Activated naive CD4-positive, alpha-beta T cell treated with anti-CD3 and anti-CD28 coated beads for 36 hours (primary cell): ENCODE measurements at regions of chr3 and their contacts with region 1.

Region 1: DNA sequence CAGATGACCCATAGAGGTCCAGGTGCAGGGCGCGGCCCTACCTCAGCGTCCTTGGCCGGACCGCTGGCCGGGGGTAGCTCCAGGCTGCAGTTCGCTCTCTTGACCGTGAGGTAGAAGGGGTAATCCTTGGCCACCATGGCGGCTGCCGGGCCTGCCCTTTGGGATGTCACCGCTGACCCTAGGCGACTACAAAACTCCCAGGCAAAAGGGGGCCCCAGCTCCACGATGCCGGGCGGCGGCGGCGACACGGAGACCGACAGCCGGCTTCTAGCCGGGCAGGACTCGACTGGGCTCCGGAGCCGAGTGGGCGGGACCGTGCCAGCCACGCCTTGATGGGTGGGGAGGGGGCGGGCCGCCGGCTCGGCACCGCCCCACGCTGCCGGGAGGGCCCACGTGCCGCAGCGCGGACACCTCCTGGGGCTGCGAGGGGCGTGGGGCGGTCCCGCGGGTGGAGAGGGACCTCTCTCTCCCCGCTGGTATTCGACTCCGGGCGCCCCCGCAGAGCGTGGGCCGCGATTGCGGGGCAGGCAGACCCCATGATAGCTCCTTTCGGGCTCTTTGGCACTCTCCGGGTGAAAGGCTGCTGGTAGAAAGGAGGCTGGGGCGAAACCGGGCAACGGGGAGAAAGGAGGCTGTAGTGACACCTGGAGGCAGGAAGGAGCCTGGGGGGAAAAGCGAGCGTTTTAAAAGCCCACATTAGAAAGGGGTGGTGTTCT is at the start of gene ARHGEF3:
- DNase-seq: peak; percentile 89
- H3K4me3 Mint-ChIP-seq: peak within 1 kb of the TSS; percentile 95
- H3K27ac Mint-ChIP-seq: peak within 1 kb of the TSS; percentile 89
- H3K4me1 Mint-ChIP-seq: peaks cover 38% of the 10 kb centered on the region
- H3K27me3 Mint-ChIP-seq: no peaks in the 10 kb centered on the region
- total RNA-seq, gene ARHGEF3: 36.4 to 37.7 TPM

Region 2: DNA sequence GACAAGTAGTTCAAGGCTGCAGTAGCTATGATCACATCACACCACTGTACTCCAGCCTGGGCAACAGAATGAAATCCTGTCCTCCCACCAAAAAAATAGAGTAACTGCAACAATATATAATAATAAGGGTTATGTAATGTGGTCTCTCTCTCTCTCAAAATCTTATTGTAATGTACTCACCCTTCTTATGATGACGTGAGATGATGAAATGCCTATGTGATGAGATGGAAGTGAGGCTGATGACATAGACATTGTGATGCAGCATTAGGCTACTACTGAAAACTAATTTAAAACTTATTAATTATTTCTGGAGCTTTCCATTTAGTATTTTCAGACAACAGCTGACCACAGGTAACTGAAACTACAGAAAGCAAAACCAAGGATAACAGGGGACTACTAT is 146.1 kb before region 1 on chr3:
- CTCF ChIA-PET with region 1: interaction called, 3 read pairs
- intact Hi-C with region 1: loop called (anchors 1 kb)
- DNase-seq: no peak
- H3K4me3 Mint-ChIP-seq: no peak overlapping the region
- H3K27ac Mint-ChIP-seq: no peak overlapping the region
- H3K4me1 Mint-ChIP-seq: peaks cover 23% of the 10 kb centered on the region
- H3K27me3 Mint-ChIP-seq: no peaks in the 10 kb centered on the region

Region 3: GRCh38 chr3:56725175-56725574 is 76.6 kb before region 1 on chr3:
- CTCF ChIA-PET with region 1: interaction called, 9 read pairs
- intact Hi-C with region 1: loop called (anchors 1 kb)
- DNase-seq: peak; percentile 83
- H3K4me3 Mint-ChIP-seq: peak overlapping the region; percentile 61
- H3K27ac Mint-ChIP-seq: peak overlapping the region; percentile 91
- H3K4me1 Mint-ChIP-seq: peaks cover 35% of the 10 kb centered on the region
- H3K27me3 Mint-ChIP-seq: no peaks in the 10 kb centered on the region

Region 4: DNA sequence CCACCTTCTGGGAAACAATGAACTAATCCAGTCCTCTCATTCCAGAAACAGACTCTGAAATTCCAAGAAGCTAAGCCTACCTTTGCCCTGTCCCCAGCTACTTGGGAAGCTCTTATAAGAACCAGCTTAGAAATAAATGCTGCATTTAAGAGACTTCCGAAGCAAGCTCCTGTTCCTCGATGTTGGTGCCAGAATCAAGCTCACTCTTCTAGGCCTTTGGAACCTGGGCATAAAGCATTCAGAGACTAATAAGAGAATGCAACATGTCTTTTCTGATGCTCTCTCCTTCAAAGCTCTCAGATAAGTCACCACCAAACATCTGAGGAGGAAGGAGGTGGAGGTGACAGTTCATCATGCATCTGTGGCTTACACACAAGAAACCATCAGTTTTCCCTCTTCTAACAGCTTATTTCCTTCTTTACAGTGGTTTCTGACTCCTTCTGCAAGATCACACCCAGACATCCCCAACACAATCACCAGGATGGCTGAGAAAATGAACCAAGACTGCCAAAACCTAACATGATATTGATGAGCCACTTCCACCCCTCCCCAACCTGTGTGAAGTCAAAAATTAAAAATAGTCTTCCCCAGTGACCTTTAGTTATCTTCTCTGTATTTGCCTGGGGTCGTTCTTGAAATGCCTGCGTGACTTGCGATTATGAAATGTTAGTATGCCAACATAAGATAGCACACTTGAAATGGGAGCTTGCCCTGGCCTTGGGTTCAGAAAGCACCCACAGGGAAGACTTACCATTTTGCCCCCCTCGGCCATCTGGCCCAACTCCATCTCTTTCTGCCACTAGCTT is 11.6 kb before region 1 on chr3:
- CTCF ChIA-PET with region 1: interaction called, 83 read pairs
- intact Hi-C with region 1: loop called (anchors 1 kb)
- DNase-seq: peak; percentile 57
- H3K4me3 Mint-ChIP-seq: peak overlapping the region; percentile 19
- H3K27ac Mint-ChIP-seq: peak overlapping the region; percentile 98
- H3K4me1 Mint-ChIP-seq: peaks cover 84% of the 10 kb centered on the region
- H3K27me3 Mint-ChIP-seq: no peaks in the 10 kb centered on the region

Region 5: GRCh38 chr3:56862352-56863074 is 60.7 kb after region 1 on chr3:
- CTCF ChIA-PET with region 1: interaction called, 7 read pairs
- intact Hi-C with region 1: loop called (anchors 1 kb)
- DNase-seq: peak; percentile 46
- H3K4me3 Mint-ChIP-seq: no peak overlapping the region
- H3K27ac Mint-ChIP-seq: peak overlapping the region; percentile 76
- H3K4me1 Mint-ChIP-seq: peaks cover 73% of the 10 kb centered on the region
- H3K27me3 Mint-ChIP-seq: no peaks in the 10 kb centered on the region

Region 6: DNA sequence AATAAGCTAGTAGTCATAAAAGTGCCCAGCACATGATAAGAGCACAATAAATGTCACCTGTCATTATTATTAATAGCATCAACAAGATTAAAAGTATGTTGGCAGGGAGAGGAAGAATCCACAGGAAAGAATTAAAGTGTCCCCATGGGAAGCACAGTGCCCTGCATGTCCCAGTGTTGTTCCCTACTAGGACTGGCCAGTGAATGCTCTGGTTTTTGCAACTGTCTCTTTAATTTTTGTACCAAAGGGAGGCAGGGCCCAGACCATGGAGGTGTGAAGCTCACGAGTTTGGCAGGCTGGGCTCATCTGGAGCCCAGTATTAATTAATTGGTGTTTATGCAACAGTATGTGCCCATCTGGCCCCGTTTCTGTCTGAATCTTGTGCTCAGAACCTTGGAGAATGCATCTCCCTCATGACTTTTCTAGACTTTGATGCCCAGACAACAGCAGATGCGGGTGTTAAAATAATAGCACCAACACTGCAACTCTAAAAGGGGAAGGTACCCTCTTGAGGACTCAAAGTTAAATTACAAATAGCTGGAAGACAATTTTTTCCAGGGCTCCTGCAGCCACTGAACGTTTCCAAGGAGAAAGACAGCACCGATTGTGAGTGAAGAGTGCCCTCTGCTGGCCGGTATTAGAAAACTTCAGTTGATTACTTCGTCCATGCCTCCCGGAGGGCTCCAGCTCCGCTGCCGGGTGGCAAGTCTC is 186.8 kb after region 1 on chr3:
- CTCF ChIA-PET with region 1: interaction called, 147 read pairs
- intact Hi-C with region 1: loop called (anchors 1 kb)
- DNase-seq: peak; percentile 82
- H3K4me3 Mint-ChIP-seq: no peak overlapping the region
- H3K27ac Mint-ChIP-seq: no peak overlapping the region
- H3K4me1 Mint-ChIP-seq: peaks cover 16% of the 10 kb centered on the region
- H3K27me3 Mint-ChIP-seq: peaks cover 5% of the 10 kb centered on the region